Esophagus muscularis mucosa (tissue), 4 donors: ENCODE measurements at regions of chr9 and their contacts with region 1.

Region 1: DNA sequence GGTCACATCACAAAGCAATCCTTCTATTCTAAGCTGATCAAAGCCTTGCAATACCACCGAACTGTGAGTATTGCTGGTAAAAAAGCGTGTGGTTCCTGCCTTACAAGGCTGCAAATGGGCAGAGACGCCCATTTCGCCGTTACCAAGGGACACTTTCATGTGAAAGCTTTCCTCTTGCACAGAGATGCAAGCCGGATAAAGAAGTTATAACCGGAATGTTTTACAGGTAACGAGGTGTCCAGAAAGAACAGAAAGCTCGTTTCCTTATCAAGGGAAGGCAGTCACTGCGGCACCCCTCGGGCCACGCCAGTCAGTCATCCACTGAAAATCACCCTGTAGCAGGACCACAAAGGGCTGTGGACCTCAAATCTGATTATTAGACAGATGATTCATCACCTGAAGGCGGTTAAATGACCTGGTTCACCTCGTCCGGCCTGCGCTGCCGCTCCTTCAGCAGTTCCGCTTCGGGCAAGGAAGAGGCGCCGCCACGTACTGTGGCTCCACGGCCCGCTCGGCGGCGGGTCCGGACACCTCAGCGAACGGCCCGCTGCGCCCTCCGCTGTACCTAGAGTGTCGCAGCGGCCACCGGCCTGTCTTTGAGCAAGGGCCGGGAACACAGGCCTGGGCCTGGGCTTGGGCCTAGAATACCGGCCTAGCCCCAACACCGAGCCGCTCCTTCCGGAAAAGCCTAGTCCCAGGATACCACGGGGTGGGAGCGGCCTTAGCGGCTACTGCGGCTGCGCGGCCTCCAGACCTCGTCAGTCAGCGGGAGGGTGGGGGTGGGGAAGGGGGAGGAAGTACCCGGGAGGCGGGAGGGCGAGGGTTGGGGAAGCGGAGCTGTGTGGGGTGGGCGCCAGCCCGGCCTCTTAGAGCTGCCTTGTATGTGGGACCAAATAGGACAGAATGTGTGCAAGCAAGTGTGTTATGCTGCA is at the start of gene KLHL9:
- DNase-seq: peak; percentile 96
- H3K4me3 ChIP-seq: peak within 1 kb of the TSS; percentile 77 to 94 (median 84)
- H3K27ac ChIP-seq: peak within 1 kb of the TSS; percentile 91 to 95 (median 94)
- H3K4me1 ChIP-seq: peaks cover 41 to 48% (median 46%) of the 10 kb centered on the region in 4 donors
- H3K27me3 ChIP-seq: no peaks in the 10 kb centered on the region
- CTCF ChIP-seq: no peak
- EP300 ChIP-seq: no peak
- POLR2A ChIP-seq: no peak
- total RNA-seq, gene KLHL9: 19.2 to 22.8 (median 21.3) TPM

Region 2: GRCh38 chr9:21265421-21266189 is 69.4 kb before region 1 on chr9:
- intact Hi-C with region 1: no loop called
- DNase-seq: no peak
- H3K4me3 ChIP-seq: no peak overlapping the region
- H3K27ac ChIP-seq: no peak overlapping the region
- H3K4me1 ChIP-seq: peaks cover 0 to 16% (median 0%) of the 10 kb centered on the region in 4 donors
- H3K27me3 ChIP-seq: no peaks in the 10 kb centered on the region
- CTCF ChIP-seq: no peak
- EP300 ChIP-seq: no peak
- POLR2A ChIP-seq: no peak

Region 3: GRCh38 chr9:21395778-21396717 is 61.1 kb after region 1 on chr9:
- intact Hi-C with region 1: loop called (anchors 5 kb)
- DNase-seq: no peak
- H3K4me3 ChIP-seq: peak overlapping the region; percentile 54 to 65 (median 56)
- H3K27ac ChIP-seq: no peak overlapping the region
- H3K4me1 ChIP-seq: peaks cover 0 to 8% (median 6%) of the 10 kb centered on the region in 4 donors
- H3K27me3 ChIP-seq: peaks cover 0 to 56% (median 3%) of the 10 kb centered on the region in 4 donors
- CTCF ChIP-seq: peak; percentile 52 to 83 (median 70)
- EP300 ChIP-seq: no peak
- POLR2A ChIP-seq: no peak